Calu3 (cell line): ENCODE measurements at regions of chr1 and their contacts with region 1.

Region 1: GRCh38 chr1:85328713-85329376 is 52.4 kb upstream of the BCL10 start:
- DNase-seq: peak; percentile 67
- H3K4me3 Mint-ChIP-seq: no peak overlapping the region
- H3K27ac Mint-ChIP-seq: peak overlapping the region; percentile 90
- H3K4me1 Mint-ChIP-seq: peaks cover 86% of the 10 kb centered on the region
- H3K27me3 Mint-ChIP-seq: no peaks in the 10 kb centered on the region
- CTCF ChIP-seq: no peak

Region 2: GRCh38 chr1:85464497-85465098 is 135.8 kb after region 1 on chr1:
- CTCF ChIA-PET with region 1: no interaction called
- intact Hi-C with region 1: loop called (anchors 5 kb)
- DNase-seq: peak; percentile 86
- H3K4me3 Mint-ChIP-seq: peak overlapping the region; percentile 79
- H3K27ac Mint-ChIP-seq: peak overlapping the region; percentile 74
- H3K4me1 Mint-ChIP-seq: peaks cover 34% of the 10 kb centered on the region
- H3K27me3 Mint-ChIP-seq: no peaks in the 10 kb centered on the region
- CTCF ChIP-seq: no peak